ENCODE measurements at regions of chr12 and their contacts with region 1.

Region 1: GRCh38 chr12:46388427-46389021 is 16.0 kb upstream of the SLC38A2 start:
- DNase-seq: peak in 1 of 9 experiments; percentile 33
- ATAC-seq: no peak
- H3K4me3 ChIP-seq: no peak overlapping the region
- H3K4me3 Mint-ChIP-seq: peak overlapping the region; percentile 7
- H3K27ac ChIP-seq: no peak overlapping the region
- H3K27ac Mint-ChIP-seq: peak overlapping the region; percentile 3
- H3K4me1 ChIP-seq: peaks cover 41% of the 10 kb centered on the region
- H3K4me1 Mint-ChIP-seq: peaks cover 49% of the 10 kb centered on the region
- H3K27me3 ChIP-seq: no peaks in the 10 kb centered on the region
- H3K27me3 Mint-ChIP-seq: no peaks in the 10 kb centered on the region
- CTCF ChIP-seq: no peak

Region 2: DNA sequence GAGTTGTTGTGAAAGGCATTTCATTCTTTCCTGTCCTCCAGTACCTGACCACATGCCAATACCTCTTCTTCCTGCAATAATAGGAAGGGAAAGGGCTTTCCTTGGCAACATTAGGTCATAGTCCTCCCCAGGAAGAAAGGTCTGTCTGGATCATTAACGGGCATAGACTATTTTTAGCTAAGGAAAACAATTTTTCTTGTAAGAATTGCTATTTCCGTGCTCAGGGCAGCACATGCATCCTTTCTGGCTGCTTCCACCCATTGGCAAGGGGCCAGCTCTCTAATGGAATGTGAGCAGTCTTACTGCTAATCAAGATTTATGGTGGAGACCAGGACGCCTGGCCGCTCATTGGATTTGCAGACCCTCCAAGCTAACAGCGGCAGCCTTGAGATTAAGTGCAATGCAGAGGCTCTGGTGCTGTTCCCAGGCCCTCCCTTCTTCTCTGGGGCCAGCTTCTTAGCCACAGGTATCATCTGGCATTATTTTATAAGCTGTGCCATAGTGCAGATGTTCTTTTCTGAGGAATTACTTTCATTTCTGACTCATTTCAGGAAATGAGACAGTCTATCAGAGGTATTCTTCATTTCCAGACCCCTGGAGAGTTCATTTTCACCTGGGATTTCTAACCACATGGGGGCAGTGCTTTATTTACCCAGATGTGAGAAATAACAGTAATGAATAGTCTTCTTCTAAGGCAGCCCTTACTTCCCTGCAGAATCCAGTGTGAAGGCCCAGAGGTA is 1119.7 kb before region 1 on chr12:
- CTCF ChIA-PET with region 1: no interaction called
- POLR2A ChIA-PET with region 1: no interaction called
- intact Hi-C with region 1: no loop called
- DNase-seq: no peak
- ATAC-seq: no peak
- H3K4me3 ChIP-seq: no peak overlapping the region
- H3K4me3 Mint-ChIP-seq: no peak overlapping the region
- H3K27ac ChIP-seq: no peak overlapping the region
- H3K27ac Mint-ChIP-seq: no peak overlapping the region
- H3K4me1 ChIP-seq: no peaks in the 10 kb centered on the region
- H3K4me1 Mint-ChIP-seq: peaks cover 17% of the 10 kb centered on the region
- H3K27me3 ChIP-seq: no peaks in the 10 kb centered on the region
- H3K27me3 Mint-ChIP-seq: no peaks in the 10 kb centered on the region
- CTCF ChIP-seq: no peak

Region 3: GRCh38 chr12:46401662-46402061 is 13.1 kb after region 1 on chr12:
- CTCF ChIA-PET with region 1: interaction called, 3 read pairs
- POLR2A ChIA-PET with region 1: interaction called, 3 read pairs
- intact Hi-C with region 1: loop called in 1 of 2 experiments (anchors 2 kb)
- DNase-seq: no peak
- ATAC-seq: no peak
- H3K4me3 ChIP-seq: no peak overlapping the region
- H3K4me3 Mint-ChIP-seq: no peak overlapping the region
- H3K27ac ChIP-seq: no peak overlapping the region
- H3K27ac Mint-ChIP-seq: no peak overlapping the region
- H3K4me1 ChIP-seq: peaks cover 13% of the 10 kb centered on the region
- H3K4me1 Mint-ChIP-seq: peaks cover 54% of the 10 kb centered on the region
- H3K27me3 ChIP-seq: no peaks in the 10 kb centered on the region
- H3K27me3 Mint-ChIP-seq: no peaks in the 10 kb centered on the region
- CTCF ChIP-seq: no peak